ENCODE measurements at regions of chr3 and their contacts with region 1.

Region 1: GRCh38 chr3:39447637-39448483 is 19.6 kb upstream of the MOBP start:
- DNase-seq: peak; percentile 71
- ATAC-seq: peak; percentile 84
- H3K4me3 Mint-ChIP-seq: no peak overlapping the region
- H3K27ac Mint-ChIP-seq: no peak overlapping the region
- H3K4me1 Mint-ChIP-seq: peaks cover 2% of the 10 kb centered on the region
- H3K27me3 Mint-ChIP-seq: peaks cover 27% of the 10 kb centered on the region

Region 2: DNA sequence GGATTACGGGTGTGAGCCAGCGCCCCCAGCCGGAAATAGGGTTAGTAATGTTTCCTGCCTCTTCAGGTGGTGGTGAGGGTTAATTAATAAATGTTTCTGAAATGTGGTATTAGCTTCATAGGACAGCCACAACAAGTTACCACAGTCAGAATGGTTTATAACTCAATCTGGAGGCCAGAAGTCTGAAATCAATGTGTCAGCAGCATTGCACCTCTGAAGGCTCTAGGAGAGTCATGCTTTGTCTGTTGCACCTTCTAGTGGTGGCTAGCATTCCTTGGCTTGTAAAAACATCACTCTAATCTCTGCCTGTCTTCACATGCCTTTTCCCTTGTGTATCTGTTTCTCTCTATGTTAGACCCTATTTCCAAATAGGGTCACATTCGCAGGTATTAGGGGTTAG is 49.2 kb before region 1 on chr3:
- CTCF ChIA-PET with region 1: no interaction called
- DNase-seq: no peak
- ATAC-seq: no peak
- H3K4me3 Mint-ChIP-seq: no peak overlapping the region
- H3K27ac Mint-ChIP-seq: no peak overlapping the region
- H3K4me1 Mint-ChIP-seq: peaks cover 25% of the 10 kb centered on the region
- H3K27me3 Mint-ChIP-seq: no peaks in the 10 kb centered on the region

Region 3: GRCh38 chr3:39473452-39474127 is 25.7 kb after region 1 on chr3:
- CTCF ChIA-PET with region 1: interaction called, 10 read pairs
- DNase-seq: no peak
- ATAC-seq: no peak
- H3K4me3 Mint-ChIP-seq: no peak overlapping the region
- H3K27ac Mint-ChIP-seq: no peak overlapping the region
- H3K4me1 Mint-ChIP-seq: no peaks in the 10 kb centered on the region
- H3K27me3 Mint-ChIP-seq: peaks cover 15% of the 10 kb centered on the region

Region 4: DNA sequence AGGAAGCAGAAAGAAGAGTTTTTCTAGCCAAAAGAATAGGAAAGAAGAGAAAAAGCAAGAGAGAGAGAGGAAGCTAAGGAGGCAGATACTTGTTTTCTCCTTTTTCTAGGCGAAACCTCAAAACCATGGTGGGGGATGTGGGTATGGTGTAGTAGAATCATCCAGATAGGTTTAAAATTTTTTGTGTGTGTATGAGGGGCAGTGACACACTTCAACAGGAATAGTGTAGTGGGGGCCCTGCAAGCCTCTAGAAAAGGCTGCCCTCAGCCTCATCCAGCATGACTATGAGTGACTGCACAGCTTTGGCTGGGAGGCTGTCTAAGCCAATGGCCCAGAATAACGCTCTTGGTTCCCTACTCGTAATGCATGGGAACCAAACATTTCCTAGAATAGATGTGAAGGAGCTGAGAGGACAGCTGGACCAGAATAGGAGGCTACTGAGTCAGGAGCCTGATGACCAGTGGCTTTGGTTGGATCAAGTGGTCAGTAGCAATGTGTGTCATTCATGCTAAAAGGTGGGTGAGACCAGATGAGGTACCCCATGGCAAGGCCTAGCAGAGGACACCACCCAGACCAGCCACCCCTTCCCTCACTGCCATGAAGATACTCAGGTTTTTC is 44.0 kb after region 1 on chr3:
- CTCF ChIA-PET with region 1: interaction called, 82 read pairs
- DNase-seq: peak; percentile 64
- ATAC-seq: peak; percentile 64
- H3K4me3 Mint-ChIP-seq: no peak overlapping the region
- H3K27ac Mint-ChIP-seq: peak overlapping the region; percentile 39
- H3K4me1 Mint-ChIP-seq: peaks cover 15% of the 10 kb centered on the region
- H3K27me3 Mint-ChIP-seq: peaks cover 31% of the 10 kb centered on the region

Region 5: DNA sequence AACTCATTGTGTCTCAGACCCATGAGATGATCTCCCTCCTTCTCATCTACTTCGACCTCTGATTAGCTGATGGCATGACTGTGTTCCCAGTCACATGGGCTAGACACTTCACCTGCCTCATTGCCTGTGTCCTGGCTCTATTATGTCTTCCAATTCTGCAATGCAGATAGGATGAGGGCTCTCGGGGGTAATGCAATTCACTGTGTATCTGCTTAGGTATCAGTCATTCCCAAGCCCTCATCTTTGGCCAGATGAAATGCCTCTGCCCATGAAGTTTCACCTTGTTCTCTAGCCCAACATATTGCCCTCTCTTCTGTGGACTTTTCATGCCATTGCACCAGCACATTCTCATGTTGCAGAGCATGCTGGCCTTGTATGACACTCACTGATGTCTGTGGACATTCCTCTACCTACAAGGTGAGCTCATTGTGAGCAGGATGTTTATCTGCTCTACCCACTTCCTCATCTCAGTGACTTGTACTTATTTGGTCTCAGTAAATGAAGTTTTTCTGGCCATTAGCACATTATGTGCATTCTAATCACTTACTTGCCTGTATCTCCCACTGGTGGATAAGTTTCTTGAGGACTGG is 51.9 kb after region 1 on chr3:
- CTCF ChIA-PET with region 1: interaction called, 82 read pairs
- DNase-seq: no peak
- ATAC-seq: no peak
- H3K4me3 Mint-ChIP-seq: no peak overlapping the region
- H3K27ac Mint-ChIP-seq: no peak overlapping the region
- H3K4me1 Mint-ChIP-seq: peaks cover 8% of the 10 kb centered on the region
- H3K27me3 Mint-ChIP-seq: peaks cover 47% of the 10 kb centered on the region

Measured in activated CD8-positive, alpha-beta memory T cell treated with anti-CD3 and anti-CD28 coated beads, Interleukin-2, amount 10 ng/mL, durations not matched to agents 7 days and 5 days (primary cell).